ENCODE measurements at regions of chr6 and their contacts with region 1.

Region 1: GRCh38 chr6:4402439-4402976 is 267.1 kb upstream of the ECI2 start:
- DNase-seq: peak; percentile 77 to 91
- ATAC-seq: peak; percentile 67 to 69
- H3K4me3 ChIP-seq: peak overlapping the region in 2 of 4 donors; percentile 7 to 21
- H3K27ac ChIP-seq: peak overlapping the region; percentile 92 to 97 (median 94)
- H3K4me1 ChIP-seq: peaks cover 53 to 59% of the 10 kb centered on the region in 2 donors
- H3K27me3 ChIP-seq: no peaks in the 10 kb centered on the region
- CTCF ChIP-seq: no peak
- POLR2A ChIP-seq: peak; percentile 43 to 61

Region 2: GRCh38 chr6:4322846-4323309 is 79.6 kb before region 1 on chr6:
- in situ Hi-C with region 1: no loop called
- intact Hi-C with region 1: loop called (anchors 2 kb)
- DNase-seq: peak; percentile 41 to 70
- ATAC-seq: peak; percentile 97
- H3K4me3 ChIP-seq: no peak overlapping the region
- H3K27ac ChIP-seq: peak overlapping the region; percentile 63 to 82 (median 80)
- H3K4me1 ChIP-seq: peaks cover 29 to 64% of the 10 kb centered on the region in 2 donors
- H3K27me3 ChIP-seq: no peaks in the 10 kb centered on the region
- CTCF ChIP-seq: no peak
- POLR2A ChIP-seq: no peak

Region 3: GRCh38 chr6:4369616-4370015 is 32.9 kb before region 1 on chr6:
- in situ Hi-C with region 1: no loop called
- intact Hi-C with region 1: loop called (anchors 1 kb)
- DNase-seq: peak; percentile 48 to 69
- ATAC-seq: peak; percentile 69 to 72
- H3K4me3 ChIP-seq: no peak overlapping the region
- H3K27ac ChIP-seq: peak overlapping the region; percentile 82 to 87 (median 85)
- H3K4me1 ChIP-seq: peaks cover 35 to 47% of the 10 kb centered on the region in 2 donors
- H3K27me3 ChIP-seq: no peaks in the 10 kb centered on the region
- CTCF ChIP-seq: no peak
- POLR2A ChIP-seq: no peak

Region 4: GRCh38 chr6:4460586-4461475 is 58.3 kb after region 1 on chr6:
- in situ Hi-C with region 1: no loop called
- intact Hi-C with region 1: loop called (anchors 5 kb)
- DNase-seq: peak; percentile 67 to 77
- ATAC-seq: peak; percentile 84 to 90
- H3K4me3 ChIP-seq: peak overlapping the region in 2 of 4 donors; percentile 7 to 19
- H3K27ac ChIP-seq: peak overlapping the region; percentile 38 to 72 (median 68)
- H3K4me1 ChIP-seq: peaks cover 18 to 22% of the 10 kb centered on the region in 2 donors
- H3K27me3 ChIP-seq: no peaks in the 10 kb centered on the region
- CTCF ChIP-seq: no peak
- POLR2A ChIP-seq: peak in 1 of 2 donors; percentile 32

Region 5: GRCh38 chr6:4664117-4664626 is 261.7 kb after region 1 on chr6:
- in situ Hi-C with region 1: no loop called
- intact Hi-C with region 1: loop called (anchors 5 kb)
- DNase-seq: peak; percentile 76 to 86
- ATAC-seq: peak; percentile 88 to 97
- H3K4me3 ChIP-seq: no peak overlapping the region
- H3K27ac ChIP-seq: peak overlapping the region; percentile 58 to 64 (median 60)
- H3K4me1 ChIP-seq: peaks cover 10 to 13% of the 10 kb centered on the region in 2 donors
- H3K27me3 ChIP-seq: no peaks in the 10 kb centered on the region
- CTCF ChIP-seq: no peak
- POLR2A ChIP-seq: no peak

Region 6: GRCh38 chr6:5260661-5261544 is 858.4 kb after region 1 on chr6 and contains the starts of genes FARS2 and LYRM4:
- in situ Hi-C with region 1: no loop called
- intact Hi-C with region 1: loop called (anchors 5 kb)
- DNase-seq: peak; percentile 64 to 81
- ATAC-seq: peak; percentile 93 to 94
- H3K4me3 ChIP-seq: peak within 1 kb of the TSS; percentile 58 to 97 (median 86)
- H3K27ac ChIP-seq: peak within 1 kb of the TSS; percentile 85 to 99 (median 94)
- H3K4me1 ChIP-seq: peaks cover 15 to 24% of the 10 kb centered on the region in 2 donors
- H3K27me3 ChIP-seq: no peaks in the 10 kb centered on the region
- CTCF ChIP-seq: peak in 2 of 5 experiments; percentile 36 to 45
- POLR2A ChIP-seq: peak; percentile 60 to 68
- total RNA-seq, gene FARS2: 13.6 to 24.0 (median 15.8) TPM
- total RNA-seq, gene LYRM4: 8.4 to 20.1 (median 12.2) TPM

Measured in gastrocnemius medialis (tissue), 4 donors.